ENCODE measurements at regions of chr7 and their contacts with region 1.

Region 1: DNA sequence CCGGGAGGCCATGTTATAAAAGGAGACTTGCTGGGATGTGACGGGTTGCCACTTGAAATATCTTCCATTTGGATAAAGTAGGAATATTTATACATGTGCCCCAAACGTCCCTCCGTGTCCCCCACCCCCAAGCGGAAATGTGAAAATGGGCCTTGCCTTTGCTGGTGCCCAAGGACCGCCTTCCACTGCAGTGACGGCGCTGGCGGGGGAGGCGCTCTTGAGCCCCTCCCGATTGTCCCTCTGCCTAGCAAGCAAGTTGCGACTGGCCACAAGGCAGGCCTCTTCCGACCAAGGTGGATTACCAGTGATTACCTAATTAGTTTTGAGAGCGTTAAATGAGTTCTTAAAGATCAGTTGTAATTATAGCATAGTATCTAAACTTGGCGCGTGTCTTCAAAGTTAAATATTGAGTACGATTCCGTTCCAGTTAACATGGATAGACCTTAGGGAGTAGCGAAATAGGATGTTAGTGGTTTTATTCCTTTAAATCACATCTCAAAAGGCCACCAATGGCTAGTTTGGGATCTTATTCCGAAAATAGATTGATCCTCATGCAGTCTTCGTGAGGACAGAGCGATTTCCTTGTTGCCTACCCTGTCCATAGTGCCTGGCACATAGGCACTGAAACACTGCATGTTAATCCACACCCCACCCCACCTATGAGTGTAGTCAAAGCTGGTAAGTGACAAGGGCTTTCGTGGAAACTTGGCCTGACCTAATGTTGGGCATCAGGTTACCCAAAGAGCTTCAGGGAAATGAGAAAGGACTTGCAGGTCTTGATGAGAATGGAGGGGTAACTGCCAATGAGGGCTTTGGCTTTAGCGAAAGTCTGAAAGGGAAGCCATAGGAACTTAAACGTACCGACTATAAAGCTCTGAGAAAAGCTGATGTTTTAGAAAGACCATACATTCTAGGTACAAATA is 1.1 kb downstream of the PPIA start:
- DNase-seq: peak; percentile 89
- H3K4me3 Mint-ChIP-seq: peak overlapping the region; percentile 98
- H3K27ac Mint-ChIP-seq: peak overlapping the region; percentile 98
- H3K4me1 Mint-ChIP-seq: peaks cover 30% of the 10 kb centered on the region
- H3K27me3 Mint-ChIP-seq: no peaks in the 10 kb centered on the region

Region 2: GRCh38 chr7:44581879-44582603 is 215.5 kb before region 1 on chr7 and contains the start of gene TMED4:
- CTCF ChIA-PET with region 1: no interaction called
- intact Hi-C with region 1: loop called (anchors 1 kb)
- DNase-seq: peak; percentile 100
- H3K4me3 Mint-ChIP-seq: peak within 1 kb of the TSS; percentile 90
- H3K27ac Mint-ChIP-seq: peak within 1 kb of the TSS; percentile 87
- H3K4me1 Mint-ChIP-seq: peaks cover 33% of the 10 kb centered on the region
- H3K27me3 Mint-ChIP-seq: peaks cover 2% of the 10 kb centered on the region
- total RNA-seq, gene TMED4: 77.3 to 81.8 TPM

Region 3: GRCh38 chr7:44606450-44607254 is 190.9 kb before region 1 on chr7 and contains the start of gene OGDH:
- CTCF ChIA-PET with region 1: no interaction called
- intact Hi-C with region 1: loop called (anchors 1 kb)
- DNase-seq: peak; percentile 100
- H3K4me3 Mint-ChIP-seq: peak within 1 kb of the TSS; percentile 96
- H3K27ac Mint-ChIP-seq: peak within 1 kb of the TSS; percentile 97
- H3K4me1 Mint-ChIP-seq: peaks cover 31% of the 10 kb centered on the region
- H3K27me3 Mint-ChIP-seq: no peaks in the 10 kb centered on the region
- total RNA-seq, gene OGDH: 73.9 to 78.4 TPM

Region 4: GRCh38 chr7:44748045-44748947 is 49.3 kb before region 1 on chr7 and contains the start of gene ZMIZ2:
- CTCF ChIA-PET with region 1: interaction called, 9 read pairs
- intact Hi-C with region 1: loop called (anchors 1 kb)
- DNase-seq: peak; percentile 92
- H3K4me3 Mint-ChIP-seq: peak within 1 kb of the TSS; percentile 82
- H3K27ac Mint-ChIP-seq: peak within 1 kb of the TSS; percentile 88
- H3K4me1 Mint-ChIP-seq: peaks cover 39% of the 10 kb centered on the region
- H3K27me3 Mint-ChIP-seq: no peaks in the 10 kb centered on the region
- total RNA-seq, gene ZMIZ2: 83.1 to 86.5 TPM

Region 5: DNA sequence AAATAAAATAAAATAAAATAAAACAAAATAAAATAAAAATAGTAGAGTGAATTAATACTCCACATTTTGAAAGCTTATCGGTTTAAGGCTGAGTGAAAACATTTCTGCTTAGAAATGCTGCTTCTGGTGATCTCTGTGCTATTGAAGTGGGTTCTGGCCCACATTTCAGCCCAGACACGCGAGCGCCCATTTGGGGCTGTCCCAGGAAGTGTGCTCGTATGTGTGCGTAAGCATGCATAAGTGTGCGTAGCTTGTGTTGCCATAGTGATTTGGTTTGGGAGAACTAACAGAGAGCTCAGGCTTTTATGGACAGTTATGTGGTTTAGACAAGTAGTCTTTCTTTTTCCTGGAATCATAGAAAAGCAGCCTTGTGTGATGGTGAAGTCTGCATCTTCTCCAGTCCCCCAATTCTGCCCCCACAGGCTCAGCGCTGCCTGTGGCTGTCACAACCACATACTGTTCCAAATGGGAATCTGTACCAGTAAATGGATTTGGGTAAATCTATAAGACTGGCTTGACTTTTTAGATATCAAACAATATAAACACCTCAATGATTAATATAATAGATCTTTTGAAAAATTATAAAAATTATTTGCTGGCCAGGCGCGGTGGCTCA is 117.5 kb after region 1 on chr7:
- CTCF ChIA-PET with region 1: no interaction called
- intact Hi-C with region 1: loop called (anchors 2 kb)
- DNase-seq: peak; percentile 88
- H3K4me3 Mint-ChIP-seq: no peak overlapping the region
- H3K27ac Mint-ChIP-seq: peak overlapping the region; percentile 83
- H3K4me1 Mint-ChIP-seq: peaks cover 17% of the 10 kb centered on the region
- H3K27me3 Mint-ChIP-seq: no peaks in the 10 kb centered on the region

Region 6: GRCh38 chr7:45111298-45112223 is 314.0 kb after region 1 on chr7 and contains the start of gene TBRG4:
- CTCF ChIA-PET with region 1: no interaction called
- intact Hi-C with region 1: loop called (anchors 1 kb)
- DNase-seq: peak; percentile 96
- H3K4me3 Mint-ChIP-seq: peak within 1 kb of the TSS; percentile 85
- H3K27ac Mint-ChIP-seq: peak within 1 kb of the TSS; percentile 89
- H3K4me1 Mint-ChIP-seq: peaks cover 40% of the 10 kb centered on the region
- H3K27me3 Mint-ChIP-seq: no peaks in the 10 kb centered on the region
- total RNA-seq, gene TBRG4: 127 to 136 TPM

Region 7: DNA sequence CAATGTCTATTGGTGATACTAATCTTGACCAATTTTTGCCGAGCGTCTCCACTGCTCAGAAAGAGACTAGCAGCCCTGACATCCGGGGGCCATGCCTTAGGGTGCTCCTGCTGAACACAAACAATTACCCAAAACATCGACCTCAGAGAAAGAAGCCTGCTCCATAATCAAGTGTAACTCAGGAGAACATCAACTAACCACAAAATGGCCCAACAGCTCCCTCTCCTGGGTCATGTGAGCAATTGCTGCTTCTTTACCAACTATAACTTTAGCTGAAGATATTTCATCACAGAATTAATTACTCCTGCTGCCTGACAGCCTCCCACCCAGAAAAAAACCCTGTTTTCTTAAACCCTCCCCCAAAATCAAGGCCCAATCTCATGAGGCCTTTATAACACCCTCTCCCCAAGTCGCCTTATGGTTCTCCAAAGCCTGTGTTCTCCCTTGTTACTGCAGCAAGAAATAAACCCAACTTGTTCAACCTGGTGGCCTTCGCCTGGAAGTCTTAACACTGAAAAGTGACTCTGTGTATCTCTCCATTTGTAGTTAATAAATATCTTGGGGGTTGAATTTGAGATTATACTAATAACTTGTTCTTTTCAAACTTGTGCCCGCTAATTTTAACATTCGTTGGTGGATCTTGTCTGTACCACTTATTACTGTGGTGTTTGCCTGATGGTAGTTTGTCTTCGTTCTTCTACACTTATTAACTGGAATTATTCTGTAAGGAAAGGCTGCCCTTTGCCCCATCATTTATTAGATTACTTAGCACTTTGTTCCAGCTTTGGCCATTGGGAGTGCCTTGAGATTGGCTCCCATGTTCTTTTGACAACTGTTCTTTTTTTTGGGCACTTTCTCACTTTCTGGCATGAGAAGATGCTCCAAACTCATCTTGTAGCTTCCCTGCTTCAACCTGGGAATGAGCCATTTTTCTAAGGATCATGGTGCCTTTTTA is 338.8 kb after region 1 on chr7:
- CTCF ChIA-PET with region 1: no interaction called
- intact Hi-C with region 1: no loop called
- DNase-seq: peak; percentile 87
- H3K4me3 Mint-ChIP-seq: no peak overlapping the region
- H3K27ac Mint-ChIP-seq: no peak overlapping the region
- H3K4me1 Mint-ChIP-seq: peaks cover 7% of the 10 kb centered on the region
- H3K27me3 Mint-ChIP-seq: no peaks in the 10 kb centered on the region